PC-9 (cell line): ENCODE measurements at regions of chr14 and their contacts with region 1.

Region 1: DNA sequence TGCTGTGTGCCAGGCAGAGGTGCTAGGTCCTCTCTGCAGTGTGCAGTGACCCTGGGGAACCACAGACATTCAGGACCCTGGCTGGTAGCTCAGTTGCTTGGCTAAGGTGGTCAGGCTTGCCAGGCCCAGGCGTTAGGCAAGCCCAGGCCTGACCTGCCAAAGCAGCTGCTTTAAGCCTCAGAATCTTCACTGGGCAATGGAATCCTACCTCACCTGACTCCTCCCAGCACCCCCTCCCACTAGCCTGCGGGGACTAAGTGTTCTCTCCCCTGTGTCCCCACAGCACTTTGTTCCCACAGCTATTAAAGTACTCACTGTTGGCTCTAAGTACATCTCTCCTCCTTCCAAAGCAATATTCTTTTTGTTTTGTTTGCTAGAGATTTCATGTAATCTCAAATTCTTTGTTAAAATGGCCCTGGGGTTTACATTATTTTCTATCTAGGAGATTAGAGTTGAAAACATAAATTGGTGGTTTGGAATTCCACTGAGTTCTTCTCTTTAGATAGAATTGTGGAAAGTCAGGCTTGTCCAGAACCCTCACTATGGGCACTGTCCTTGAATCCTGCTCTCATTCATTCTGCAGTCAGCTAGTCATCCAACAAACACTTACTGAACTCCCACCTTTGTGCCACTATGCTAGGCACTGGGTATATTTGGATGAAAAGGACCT is 44.4 kb downstream of the DGLUCY start:
- DNase-seq: no peak
- H3K4me3 ChIP-seq: no peak overlapping the region
- H3K27ac ChIP-seq: no peak overlapping the region
- H3K4me1 ChIP-seq: no peaks in the 10 kb centered on the region
- H3K27me3 ChIP-seq: no peaks in the 10 kb centered on the region
- CTCF ChIP-seq: no peak

Region 2: GRCh38 chr14:90883782-90884181 is 274.4 kb before region 1 on chr14:
- CTCF ChIA-PET with region 1: no interaction called
- POLR2A ChIA-PET with region 1: no interaction called
- intact Hi-C with region 1: no loop called
- DNase-seq: no peak
- H3K4me3 ChIP-seq: no peak overlapping the region
- H3K27ac ChIP-seq: no peak overlapping the region
- H3K4me1 ChIP-seq: no peaks in the 10 kb centered on the region
- H3K27me3 ChIP-seq: no peaks in the 10 kb centered on the region
- CTCF ChIP-seq: no peak

Region 3: GRCh38 chr14:90999299-90999698 is 158.9 kb before region 1 on chr14:
- CTCF ChIA-PET with region 1: no interaction called
- POLR2A ChIA-PET with region 1: interaction called, 11 read pairs
- intact Hi-C with region 1: no loop called
- DNase-seq: no peak
- H3K4me3 ChIP-seq: no peak overlapping the region
- H3K27ac ChIP-seq: no peak overlapping the region
- H3K4me1 ChIP-seq: no peaks in the 10 kb centered on the region
- H3K27me3 ChIP-seq: no peaks in the 10 kb centered on the region
- CTCF ChIP-seq: no peak

Region 4: GRCh38 chr14:92728759-92729370 is 1570.6 kb after region 1 on chr14:
- CTCF ChIA-PET with region 1: no interaction called
- POLR2A ChIA-PET with region 1: interaction called, 29 read pairs
- intact Hi-C with region 1: no loop called
- DNase-seq: peak; percentile 48 to 78
- H3K4me3 ChIP-seq: no peak overlapping the region
- H3K27ac ChIP-seq: peak overlapping the region; percentile 74
- H3K4me1 ChIP-seq: peaks cover 57% of the 10 kb centered on the region
- H3K27me3 ChIP-seq: no peaks in the 10 kb centered on the region
- CTCF ChIP-seq: no peak